ENCODE measurements at regions of chr7 and their contacts with region 1.

Region 1: DNA sequence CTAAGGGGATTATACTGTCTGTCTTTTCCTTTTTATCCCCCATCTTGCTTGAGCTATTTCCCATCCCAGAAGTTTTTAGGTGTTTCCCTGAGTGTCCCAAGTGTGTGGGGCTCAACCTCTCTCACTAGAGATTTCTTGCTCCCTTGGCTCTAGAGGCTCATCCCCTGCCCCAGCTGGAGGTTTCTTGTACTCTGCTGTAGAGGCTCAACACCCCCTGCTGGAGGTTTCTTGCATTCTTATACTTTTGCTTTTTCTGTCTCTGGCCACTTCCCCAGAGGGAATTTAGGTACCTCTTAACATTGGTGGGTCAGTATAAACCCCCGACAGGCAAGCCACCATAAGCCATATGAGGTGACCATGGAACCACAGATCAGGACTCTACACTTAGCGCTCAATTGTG is 114.2 kb upstream of the FAM3C start:
- DNase-seq: peak in 1 of 2 experiments; percentile 13
- H3K4me3 ChIP-seq: no peak overlapping the region
- H3K4me3 Mint-ChIP-seq: no peak overlapping the region
- H3K27ac Mint-ChIP-seq: no peak overlapping the region
- H3K4me1 ChIP-seq: no peaks in the 10 kb centered on the region
- H3K4me1 Mint-ChIP-seq: no peaks in the 10 kb centered on the region
- H3K27me3 ChIP-seq: no peaks in the 10 kb centered on the region
- H3K27me3 Mint-ChIP-seq: no peaks in the 10 kb centered on the region
- CTCF ChIP-seq: no peak

Region 2: GRCh38 chr7:121366852-121367431 is 143.4 kb before region 1 on chr7:
- CTCF ChIA-PET with region 1: no interaction called
- POLR2A ChIA-PET with region 1: no interaction called
- intact Hi-C with region 1: loop called (anchors 1 kb)
- DNase-seq: peak in 1 of 2 experiments; percentile 28
- H3K4me3 ChIP-seq: no peak overlapping the region
- H3K4me3 Mint-ChIP-seq: no peak overlapping the region
- H3K27ac Mint-ChIP-seq: no peak overlapping the region
- H3K4me1 ChIP-seq: no peaks in the 10 kb centered on the region
- H3K4me1 Mint-ChIP-seq: no peaks in the 10 kb centered on the region
- H3K27me3 ChIP-seq: no peaks in the 10 kb centered on the region
- H3K27me3 Mint-ChIP-seq: no peaks in the 10 kb centered on the region
- CTCF ChIP-seq: peak; percentile 55 to 67